BJ (cell line): ENCODE measurements at regions of chr5 and their contacts with region 1.

Region 1: DNA sequence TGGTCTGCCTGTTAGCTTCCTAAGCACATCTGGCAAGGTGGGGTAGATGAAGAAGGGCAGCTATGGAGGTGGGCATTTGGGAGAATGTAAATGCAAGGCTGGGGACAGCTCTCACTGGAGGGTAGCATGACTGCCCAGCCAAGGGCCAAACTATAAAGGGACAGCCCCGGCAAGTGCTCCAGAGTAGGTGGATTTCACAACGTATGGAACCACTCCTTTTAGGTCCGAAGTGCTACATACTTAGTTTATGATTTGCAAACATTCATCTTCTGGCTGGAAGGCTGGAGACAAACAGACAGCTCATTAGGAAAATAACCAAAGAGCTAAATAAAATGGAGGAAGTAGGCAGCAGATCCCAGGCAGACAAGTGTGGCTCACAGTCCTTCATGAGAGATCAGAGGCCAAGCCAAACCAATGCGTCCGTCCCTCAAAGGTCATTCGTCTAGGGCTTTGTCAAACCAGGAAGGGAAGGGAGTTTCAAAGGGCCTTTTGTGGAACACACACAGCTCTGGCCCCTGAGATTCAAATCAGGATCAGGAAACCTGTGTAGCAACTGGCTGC is 42.5 kb upstream of the GLRX start:
- DNase-seq: no peak
- H3K4me3 ChIP-seq: no peak overlapping the region
- H3K27me3 ChIP-seq: no peaks in the 10 kb centered on the region
- CTCF ChIP-seq: no peak

Region 2: DNA sequence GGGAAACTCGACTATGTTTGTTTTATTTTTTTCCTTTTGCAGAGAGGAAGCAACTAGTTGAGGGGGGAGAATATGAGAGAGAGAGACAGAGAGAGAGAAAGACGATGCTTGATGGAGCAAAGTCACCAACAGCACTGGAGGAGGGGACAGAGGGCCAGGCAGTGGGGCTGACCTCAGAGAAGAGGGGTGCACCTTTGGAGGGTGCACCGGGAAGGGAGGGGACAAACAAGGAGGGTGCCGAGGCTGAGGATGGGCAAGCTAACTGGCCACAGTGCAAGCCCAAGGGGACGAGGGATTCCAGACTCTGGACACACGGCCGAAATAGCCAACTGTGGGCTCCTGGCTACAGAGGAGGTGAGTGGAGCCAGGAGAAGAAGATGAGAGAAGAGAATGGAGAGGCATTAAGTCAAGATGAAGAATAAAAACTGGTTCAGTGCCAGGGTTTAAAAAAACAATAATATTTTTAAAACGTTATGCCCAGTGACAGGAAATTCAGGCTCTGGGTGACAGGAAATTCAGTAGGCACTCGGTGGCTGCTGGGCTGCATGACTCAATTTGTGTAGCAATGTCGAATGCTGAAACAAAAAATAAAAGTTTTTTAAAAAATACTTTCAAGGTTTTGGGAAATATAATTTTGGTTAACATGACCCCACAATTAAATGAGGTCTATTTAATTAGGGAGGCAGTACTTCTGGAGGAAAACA is 29.2 kb before region 1 on chr5:
- CTCF ChIA-PET with region 1: no interaction called
- POLR2A ChIA-PET with region 1: interaction called, 17 read pairs
- DNase-seq: no peak
- H3K4me3 ChIP-seq: no peak overlapping the region
- H3K27me3 ChIP-seq: no peaks in the 10 kb centered on the region
- CTCF ChIP-seq: no peak

Region 3: GRCh38 chr5:95891499-95891898 is 26.5 kb after region 1 on chr5:
- CTCF ChIA-PET with region 1: no interaction called
- POLR2A ChIA-PET with region 1: no interaction called
- DNase-seq: no peak
- H3K4me3 ChIP-seq: no peak overlapping the region
- H3K27me3 ChIP-seq: no peaks in the 10 kb centered on the region
- CTCF ChIP-seq: no peak